CD8-positive, alpha-beta T cell (primary cell): ENCODE measurements at regions of chr9 and their contacts with region 1.

Region 1: DNA sequence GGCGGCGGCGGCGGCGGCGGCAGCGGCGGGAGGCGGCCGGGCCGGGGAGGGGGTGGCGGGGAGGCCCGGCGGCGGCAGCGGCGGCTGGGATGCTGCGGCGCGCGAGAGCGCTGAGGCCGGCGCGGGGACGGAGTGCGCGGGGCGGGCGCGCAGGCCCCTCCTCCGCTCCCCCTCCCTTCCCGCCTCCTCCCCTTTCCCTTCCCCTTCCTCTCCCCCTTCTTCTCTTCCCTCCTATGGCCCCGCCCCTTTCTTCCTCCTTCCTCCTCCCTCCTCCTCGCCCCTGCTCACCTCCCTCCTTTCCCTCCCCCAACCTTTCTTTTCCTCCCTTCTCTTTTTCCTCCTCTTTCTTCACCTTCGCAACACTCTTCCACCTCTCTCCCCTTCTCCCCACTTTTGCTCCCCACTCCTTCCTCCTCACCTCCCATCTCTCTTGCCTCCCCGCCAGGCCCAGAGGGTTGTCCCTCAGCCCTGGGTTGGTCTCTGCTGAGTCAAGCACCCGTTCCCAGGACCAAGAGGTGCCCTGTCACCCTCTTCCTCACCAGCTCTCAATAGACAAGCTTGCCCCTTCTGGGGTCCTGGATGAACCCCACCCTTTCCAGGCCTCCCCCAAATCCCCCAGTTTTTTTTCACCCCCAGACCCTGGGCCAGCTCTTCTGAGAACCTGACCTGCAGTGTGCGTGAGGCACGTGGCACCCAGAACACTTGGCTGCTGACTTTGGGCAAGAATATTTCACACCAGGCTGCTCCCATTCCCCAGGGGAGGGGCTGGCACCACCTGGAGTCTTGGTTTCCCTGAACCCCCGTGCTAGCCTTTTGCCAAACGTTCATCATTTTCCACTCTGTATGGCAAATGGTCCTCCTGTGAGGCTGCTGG is at the start of gene SEMA4D:
- DNase-seq: peak in 7 of 9 experiments; percentile 40 to 86 (median 58)
- ATAC-seq: no peak
- H3K4me3 ChIP-seq: peak within 1 kb of the TSS; percentile 78 to 82
- H3K4me3 Mint-ChIP-seq: peak within 1 kb of the TSS; percentile 94
- H3K27ac ChIP-seq: peak within 1 kb of the TSS; percentile 77
- H3K27ac Mint-ChIP-seq: peak within 1 kb of the TSS; percentile 99
- H3K4me1 ChIP-seq: peaks cover 84% of the 10 kb centered on the region
- H3K4me1 Mint-ChIP-seq: peaks cover 88% of the 10 kb centered on the region
- H3K27me3 ChIP-seq: no peaks in the 10 kb centered on the region
- H3K27me3 Mint-ChIP-seq: no peaks in the 10 kb centered on the region
- CTCF ChIP-seq: no peak
- total RNA-seq, gene SEMA4D: 286 to 305 TPM

Region 2: GRCh38 chr9:89455356-89455824 is 42.8 kb before region 1 on chr9:
- CTCF ChIA-PET with region 1: interaction called, 3 read pairs
- POLR2A ChIA-PET with region 1: interaction called, 11 read pairs
- intact Hi-C with region 1: loop called in 1 of 2 experiments (anchors 5 kb)
- DNase-seq: peak in 7 of 9 experiments; percentile 46 to 78 (median 56)
- ATAC-seq: peak; percentile 53
- H3K4me3 ChIP-seq: peak overlapping the region in 1 of 2 experiments; percentile 7
- H3K4me3 Mint-ChIP-seq: peak overlapping the region; percentile 61
- H3K27ac ChIP-seq: peak overlapping the region; percentile 47 to 69
- H3K27ac Mint-ChIP-seq: peak overlapping the region; percentile 98
- H3K4me1 ChIP-seq: peaks cover 90% of the 10 kb centered on the region
- H3K4me1 Mint-ChIP-seq: peaks cover 94% of the 10 kb centered on the region
- H3K27me3 ChIP-seq: no peaks in the 10 kb centered on the region
- H3K27me3 Mint-ChIP-seq: no peaks in the 10 kb centered on the region
- CTCF ChIP-seq: no peak

Region 3: DNA sequence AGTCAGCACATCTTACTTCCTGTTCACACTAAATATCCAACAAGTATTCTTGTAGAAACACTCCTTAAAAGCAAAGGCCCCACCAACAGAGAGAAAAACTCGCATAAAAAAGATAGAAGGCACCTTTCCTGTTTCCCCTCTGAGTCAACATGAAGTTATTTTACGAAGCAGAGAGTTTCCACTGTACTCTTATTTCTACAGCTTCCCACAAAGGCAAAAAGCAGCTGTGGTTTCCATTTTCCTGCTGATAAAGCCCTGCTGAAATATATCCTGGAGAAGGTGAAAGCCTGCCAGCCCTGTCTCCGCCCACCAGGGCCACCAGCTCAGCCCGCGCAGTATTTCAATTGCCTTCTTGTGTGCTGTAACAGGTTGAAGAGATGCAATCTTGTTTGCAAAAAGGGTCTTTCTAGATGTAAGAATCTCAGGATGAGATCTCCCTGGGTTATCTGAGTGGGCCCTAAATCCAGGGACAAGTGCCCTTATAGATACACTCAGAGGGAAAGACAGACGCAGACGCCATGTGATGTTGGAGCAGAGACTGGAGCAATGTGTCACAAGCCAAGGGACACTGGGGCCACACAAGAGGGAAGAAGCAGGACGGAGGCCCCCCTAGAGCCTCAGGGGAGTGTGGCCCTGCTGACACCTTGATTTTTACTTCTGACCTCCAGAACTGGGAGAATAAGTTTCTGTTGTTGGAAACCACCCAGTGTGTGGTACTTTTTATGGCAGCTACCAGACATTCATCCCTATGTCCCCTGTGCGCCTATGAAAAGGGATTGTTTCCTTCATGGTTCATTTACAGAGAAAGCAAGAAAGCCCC is 20.2 kb before region 1 on chr9:
- CTCF ChIA-PET with region 1: interaction called, 6 read pairs
- POLR2A ChIA-PET with region 1: interaction called, 10 read pairs
- intact Hi-C with region 1: loop called in 1 of 2 experiments (anchors 2 kb)
- DNase-seq: peak in 6 of 9 experiments; percentile 36 to 72 (median 66)
- ATAC-seq: peak; percentile 35
- H3K4me3 ChIP-seq: peak overlapping the region; percentile 44 to 50
- H3K4me3 Mint-ChIP-seq: peak overlapping the region; percentile 91
- H3K27ac ChIP-seq: peak overlapping the region; percentile 26 to 65
- H3K27ac Mint-ChIP-seq: peak overlapping the region; percentile 99
- H3K4me1 ChIP-seq: peaks cover 82% of the 10 kb centered on the region
- H3K4me1 Mint-ChIP-seq: peaks cover 90% of the 10 kb centered on the region
- H3K27me3 ChIP-seq: no peaks in the 10 kb centered on the region
- H3K27me3 Mint-ChIP-seq: no peaks in the 10 kb centered on the region
- CTCF ChIP-seq: no peak

Region 4: GRCh38 chr9:89483592-89484522 is 14.4 kb before region 1 on chr9:
- CTCF ChIA-PET with region 1: interaction called, 6 read pairs
- POLR2A ChIA-PET with region 1: interaction called, 10 read pairs
- intact Hi-C with region 1: loop called in 1 of 2 experiments (anchors 1 kb)
- DNase-seq: peak; percentile 44 to 88 (median 81)
- ATAC-seq: peak; percentile 76
- H3K4me3 ChIP-seq: peak overlapping the region; percentile 52
- H3K4me3 Mint-ChIP-seq: peak overlapping the region; percentile 86
- H3K27ac ChIP-seq: peak overlapping the region; percentile 20 to 66
- H3K27ac Mint-ChIP-seq: peak overlapping the region; percentile 96
- H3K4me1 ChIP-seq: peaks cover 77% of the 10 kb centered on the region
- H3K4me1 Mint-ChIP-seq: peaks cover 86% of the 10 kb centered on the region
- H3K27me3 ChIP-seq: no peaks in the 10 kb centered on the region
- H3K27me3 Mint-ChIP-seq: no peaks in the 10 kb centered on the region
- CTCF ChIP-seq: no peak

Region 5: DNA sequence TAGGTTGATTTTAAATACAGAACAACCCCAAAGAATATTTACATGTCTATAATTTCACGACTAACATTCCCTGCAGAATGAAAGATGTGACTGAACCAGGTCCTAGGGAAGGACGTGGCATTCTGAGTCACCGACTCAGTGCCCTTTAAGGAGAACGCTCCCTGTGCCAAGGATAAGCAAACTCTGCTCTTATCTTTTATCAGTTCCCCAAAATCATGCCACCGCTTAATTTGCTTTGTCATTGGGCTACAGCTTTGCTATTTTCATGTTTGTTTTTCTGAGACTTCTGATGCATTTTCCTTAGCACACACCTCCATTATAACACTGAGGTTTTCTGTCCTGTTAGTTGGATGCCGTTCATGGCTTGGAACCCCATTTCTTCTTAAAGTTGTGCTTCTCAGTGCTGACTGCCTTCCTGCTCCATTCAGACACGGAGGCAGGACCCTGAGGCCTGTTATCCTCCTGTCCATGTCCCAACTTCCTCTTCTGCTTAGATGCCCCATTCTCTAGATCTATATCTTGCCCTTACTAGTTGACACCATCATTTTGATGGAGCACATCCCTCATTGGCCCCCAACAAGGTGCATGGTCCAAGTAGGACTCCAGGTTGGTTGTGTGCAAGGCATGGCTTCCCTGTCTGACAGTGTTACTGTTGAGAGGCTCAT is 10.9 kb after region 1 on chr9:
- CTCF ChIA-PET with region 1: interaction called, 14 read pairs
- POLR2A ChIA-PET with region 1: interaction called, 5 read pairs
- intact Hi-C with region 1: no loop called
- DNase-seq: no peak
- ATAC-seq: no peak
- H3K4me3 ChIP-seq: no peak overlapping the region
- H3K4me3 Mint-ChIP-seq: no peak overlapping the region
- H3K27ac ChIP-seq: no peak overlapping the region
- H3K27ac Mint-ChIP-seq: peak overlapping the region; percentile 79
- H3K4me1 ChIP-seq: peaks cover 64% of the 10 kb centered on the region
- H3K4me1 Mint-ChIP-seq: peaks cover 84% of the 10 kb centered on the region
- H3K27me3 ChIP-seq: no peaks in the 10 kb centered on the region
- H3K27me3 Mint-ChIP-seq: no peaks in the 10 kb centered on the region
- CTCF ChIP-seq: no peak

Region 6: DNA sequence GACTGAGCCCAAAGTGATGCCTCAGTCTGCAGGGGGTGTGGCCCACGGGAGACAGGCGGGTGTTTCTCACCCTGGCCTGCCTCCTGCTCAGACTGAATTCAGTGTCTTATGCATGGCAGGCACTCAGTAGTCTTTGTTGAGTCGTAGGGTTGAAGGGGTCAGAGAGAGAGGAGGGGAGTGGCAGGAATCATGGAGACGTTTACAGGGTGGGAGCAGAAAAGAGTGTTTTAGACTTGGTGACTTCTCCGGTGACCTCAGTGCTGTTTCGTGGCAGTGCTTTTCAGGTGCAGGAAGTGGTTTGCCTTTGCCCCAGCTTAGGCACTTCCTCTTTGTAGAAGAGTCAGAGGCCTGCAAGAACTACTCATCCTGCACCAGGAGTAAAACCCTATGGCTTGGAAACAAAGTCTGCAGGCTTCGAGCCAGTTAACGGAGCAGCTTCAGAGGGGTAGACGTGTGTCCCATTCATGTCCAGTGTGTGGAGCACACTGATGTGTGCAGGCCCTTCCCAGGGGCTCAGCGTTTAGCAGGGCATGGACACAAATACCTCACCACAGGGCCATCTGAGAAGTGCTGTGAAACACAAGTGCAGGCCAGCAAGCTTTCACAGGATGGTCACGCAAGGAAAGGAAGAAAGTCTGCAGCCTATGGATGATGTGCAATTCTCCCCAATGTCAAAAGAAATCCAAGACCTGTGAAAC is 24.2 kb after region 1 on chr9:
- CTCF ChIA-PET with region 1: interaction called, 8 read pairs
- POLR2A ChIA-PET with region 1: interaction called, 9 read pairs
- intact Hi-C with region 1: loop called (anchors 1 kb)
- DNase-seq: peak; percentile 46 to 95 (median 77)
- ATAC-seq: peak; percentile 85
- H3K4me3 ChIP-seq: peak overlapping the region in 1 of 2 experiments; percentile 4
- H3K4me3 Mint-ChIP-seq: peak overlapping the region; percentile 48
- H3K27ac ChIP-seq: peak overlapping the region; percentile 60 to 71
- H3K27ac Mint-ChIP-seq: peak overlapping the region; percentile 95
- H3K4me1 ChIP-seq: peaks cover 96% of the 10 kb centered on the region
- H3K4me1 Mint-ChIP-seq: peaks cover 100% of the 10 kb centered on the region
- H3K27me3 ChIP-seq: no peaks in the 10 kb centered on the region
- H3K27me3 Mint-ChIP-seq: no peaks in the 10 kb centered on the region
- CTCF ChIP-seq: no peak

Region 7: GRCh38 chr9:89536145-89536574 is 37.9 kb after region 1 on chr9:
- CTCF ChIA-PET with region 1: interaction called, 6 read pairs
- POLR2A ChIA-PET with region 1: interaction called, 4 read pairs
- intact Hi-C with region 1: loop called in 1 of 2 experiments (anchors 5 kb)
- DNase-seq: peak in 2 of 9 experiments; percentile 73 to 88
- ATAC-seq: peak; percentile 83
- H3K4me3 ChIP-seq: peak overlapping the region; percentile 9 to 13
- H3K4me3 Mint-ChIP-seq: peak overlapping the region; percentile 73
- H3K27ac ChIP-seq: peak overlapping the region; percentile 29 to 79
- H3K27ac Mint-ChIP-seq: peak overlapping the region; percentile 94
- H3K4me1 ChIP-seq: peaks cover 96% of the 10 kb centered on the region
- H3K4me1 Mint-ChIP-seq: peaks cover 94% of the 10 kb centered on the region
- H3K27me3 ChIP-seq: no peaks in the 10 kb centered on the region
- H3K27me3 Mint-ChIP-seq: no peaks in the 10 kb centered on the region
- CTCF ChIP-seq: no peak

Region 8: DNA sequence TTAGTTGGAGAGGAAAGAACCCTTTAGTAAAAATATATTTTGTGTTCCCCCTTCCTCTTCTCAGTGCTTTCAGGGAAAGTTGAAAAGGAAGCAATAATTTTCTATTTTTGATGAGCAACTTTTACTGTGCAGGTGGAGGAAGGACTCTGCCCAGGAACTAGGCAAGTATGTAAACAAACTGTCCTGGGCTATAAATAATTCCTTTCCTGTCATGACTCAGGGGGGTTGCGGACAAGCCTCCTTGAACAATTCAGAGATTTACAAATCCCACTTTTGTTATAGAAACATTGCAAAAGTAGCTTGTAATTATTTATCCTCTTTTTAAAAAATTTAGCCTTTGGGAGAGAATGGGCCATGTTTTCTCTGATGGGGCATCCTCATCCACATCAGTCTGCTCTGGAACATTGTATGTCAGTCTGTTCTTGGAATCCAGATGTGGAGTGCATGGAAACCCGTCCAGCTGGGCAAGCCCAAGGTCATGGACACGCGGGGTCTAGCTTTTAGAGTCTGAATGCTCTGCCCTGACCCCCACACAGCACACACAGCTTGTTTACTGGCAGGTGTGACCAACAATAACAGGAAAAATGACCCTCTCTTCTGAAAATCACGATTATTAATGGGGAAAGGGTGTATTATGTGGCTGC is 234.2 kb after region 1 on chr9:
- CTCF ChIA-PET with region 1: no interaction called
- POLR2A ChIA-PET with region 1: no interaction called
- intact Hi-C with region 1: no loop called
- DNase-seq: no peak
- ATAC-seq: no peak
- H3K4me3 ChIP-seq: no peak overlapping the region
- H3K4me3 Mint-ChIP-seq: no peak overlapping the region
- H3K27ac ChIP-seq: no peak overlapping the region
- H3K27ac Mint-ChIP-seq: no peak overlapping the region
- H3K4me1 ChIP-seq: no peaks in the 10 kb centered on the region
- H3K4me1 Mint-ChIP-seq: peaks cover 3% of the 10 kb centered on the region
- H3K27me3 ChIP-seq: peaks cover 0 to 5% of the 10 kb centered on the region in 2 experiments
- H3K27me3 Mint-ChIP-seq: no peaks in the 10 kb centered on the region
- CTCF ChIP-seq: no peak

Region 9: GRCh38 chr9:91334053-91334452 is 1835.8 kb after region 1 on chr9:
- CTCF ChIA-PET with region 1: no interaction called
- POLR2A ChIA-PET with region 1: no interaction called
- intact Hi-C with region 1: no loop called
- DNase-seq: no peak
- ATAC-seq: no peak
- H3K4me3 ChIP-seq: no peak overlapping the region
- H3K4me3 Mint-ChIP-seq: no peak overlapping the region
- H3K27ac ChIP-seq: no peak overlapping the region
- H3K27ac Mint-ChIP-seq: no peak overlapping the region
- H3K4me1 ChIP-seq: no peaks in the 10 kb centered on the region
- H3K4me1 Mint-ChIP-seq: peaks cover 12% of the 10 kb centered on the region
- H3K27me3 ChIP-seq: no peaks in the 10 kb centered on the region
- H3K27me3 Mint-ChIP-seq: no peaks in the 10 kb centered on the region
- CTCF ChIP-seq: no peak